SK-N-SH (cell line): ENCODE measurements at regions of chr15 and their contacts with region 1.

Region 1: GRCh38 chr15:91520850-91521249 is 332.7 kb upstream of the SLCO3A1 start:
- DNase-seq: no peak
- H3K4me3 ChIP-seq: no peak overlapping the region
- H3K27ac ChIP-seq: no peak overlapping the region
- H3K4me1 ChIP-seq: peaks cover 0 to 12% of the 10 kb centered on the region in 2 experiments; a peak in 2 of 4 replicates
- H3K27me3 ChIP-seq: no peaks in the 10 kb centered on the region
- CTCF ChIP-seq: no peak
- EP300 ChIP-seq: no peak
- RAD21 ChIP-seq: no peak

Region 2: DNA sequence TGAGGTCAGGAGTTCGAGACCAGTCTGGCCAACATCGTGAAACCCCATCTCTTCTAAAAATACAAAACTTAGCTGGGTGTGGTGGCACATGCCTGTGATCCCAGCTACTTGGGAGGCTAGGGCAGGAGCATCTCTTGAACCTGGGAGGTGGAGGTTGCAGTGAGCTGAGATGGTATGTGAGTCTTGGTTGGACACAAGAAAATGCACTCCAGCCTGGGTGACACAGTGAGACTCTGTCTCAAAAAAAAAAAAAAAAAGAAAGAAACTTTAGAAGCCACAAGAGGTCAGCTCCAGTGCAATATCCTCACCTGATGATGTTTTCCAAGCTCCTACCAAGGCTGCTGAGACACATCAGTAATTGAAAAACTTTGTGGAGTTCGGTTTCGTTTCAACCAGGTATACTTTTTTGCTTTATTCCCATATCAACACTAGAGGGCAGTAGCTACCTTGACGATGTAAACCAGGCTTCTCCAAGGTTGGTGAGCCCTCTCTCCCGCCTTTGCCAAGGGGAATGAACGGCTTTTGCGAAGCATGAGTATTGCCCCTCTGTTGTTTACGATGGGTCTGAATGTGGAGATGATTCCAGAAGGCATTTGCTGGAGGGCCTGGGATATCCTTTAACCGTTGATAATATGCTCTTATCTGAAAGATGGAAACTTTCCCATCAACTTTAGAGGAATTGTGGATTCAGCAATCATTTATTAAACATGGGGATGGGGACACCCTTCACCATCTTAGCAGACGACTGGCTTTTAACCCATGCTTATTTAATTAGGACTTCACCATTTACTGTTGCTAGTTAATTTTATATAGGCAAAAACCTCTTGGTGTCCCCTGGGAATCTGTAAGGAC is 218.0 kb before region 1 on chr15:
- CTCF ChIA-PET with region 1: interaction called, 11 read pairs
- POLR2A ChIA-PET with region 1: no interaction called
- DNase-seq: peak; percentile 83
- H3K4me3 ChIP-seq: peak overlapping the region in 1 of 2 experiments; percentile 16; a peak in 1 of 4 replicates
- H3K27ac ChIP-seq: no peak overlapping the region
- H3K4me1 ChIP-seq: peaks cover 0 to 4% of the 10 kb centered on the region in 2 experiments; a peak in 3 of 4 replicates
- H3K27me3 ChIP-seq: peaks cover 10% of the 10 kb centered on the region
- CTCF ChIP-seq: peak; percentile 80
- EP300 ChIP-seq: no peak
- RAD21 ChIP-seq: peak; percentile 99

Region 3: DNA sequence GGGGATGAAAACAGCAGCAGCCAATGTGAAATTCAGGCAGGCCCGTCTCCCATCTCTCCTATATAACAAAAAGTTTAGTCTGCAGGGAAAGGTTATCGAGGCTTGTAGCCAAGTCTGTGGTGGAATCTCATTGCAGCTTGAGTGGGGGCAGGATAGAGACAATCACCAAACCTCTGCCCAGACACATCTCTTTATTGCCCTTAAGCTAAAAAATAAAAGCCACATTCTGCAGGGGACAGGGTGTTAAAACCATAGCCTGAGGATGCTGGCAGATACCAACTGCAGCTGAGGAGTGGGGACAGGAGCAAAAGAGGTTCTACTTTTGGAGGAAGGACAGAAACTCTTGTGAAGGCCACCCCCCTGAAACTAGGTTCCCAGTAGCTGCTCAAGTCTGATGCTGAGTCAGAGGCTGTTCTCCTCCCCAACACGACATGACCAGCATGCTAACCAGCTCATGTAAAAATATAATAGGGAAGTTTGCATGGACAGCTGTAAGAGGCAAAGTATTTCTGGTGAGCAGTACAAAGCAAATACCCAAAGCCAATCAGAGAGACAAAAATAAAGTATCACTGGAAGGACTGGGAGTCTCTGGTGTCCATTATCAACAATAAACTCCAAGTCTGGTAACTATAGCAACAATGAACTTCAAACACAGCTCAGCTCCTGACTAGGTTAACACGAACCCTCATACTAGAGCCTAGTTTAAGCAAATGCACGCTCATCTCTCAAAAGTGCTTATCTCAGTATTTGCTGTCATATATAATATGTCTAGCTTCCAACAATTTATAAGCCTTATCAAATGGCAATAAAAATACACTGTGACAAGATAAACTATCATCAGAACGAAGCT is 29.5 kb before region 1 on chr15:
- CTCF ChIA-PET with region 1: no interaction called
- POLR2A ChIA-PET with region 1: no interaction called
- DNase-seq: no peak
- H3K4me3 ChIP-seq: no peak overlapping the region
- H3K27ac ChIP-seq: no peak overlapping the region
- H3K4me1 ChIP-seq: no peaks in the 10 kb centered on the region
- H3K27me3 ChIP-seq: no peaks in the 10 kb centered on the region
- CTCF ChIP-seq: no peak
- EP300 ChIP-seq: no peak
- RAD21 ChIP-seq: no peak

Region 4: DNA sequence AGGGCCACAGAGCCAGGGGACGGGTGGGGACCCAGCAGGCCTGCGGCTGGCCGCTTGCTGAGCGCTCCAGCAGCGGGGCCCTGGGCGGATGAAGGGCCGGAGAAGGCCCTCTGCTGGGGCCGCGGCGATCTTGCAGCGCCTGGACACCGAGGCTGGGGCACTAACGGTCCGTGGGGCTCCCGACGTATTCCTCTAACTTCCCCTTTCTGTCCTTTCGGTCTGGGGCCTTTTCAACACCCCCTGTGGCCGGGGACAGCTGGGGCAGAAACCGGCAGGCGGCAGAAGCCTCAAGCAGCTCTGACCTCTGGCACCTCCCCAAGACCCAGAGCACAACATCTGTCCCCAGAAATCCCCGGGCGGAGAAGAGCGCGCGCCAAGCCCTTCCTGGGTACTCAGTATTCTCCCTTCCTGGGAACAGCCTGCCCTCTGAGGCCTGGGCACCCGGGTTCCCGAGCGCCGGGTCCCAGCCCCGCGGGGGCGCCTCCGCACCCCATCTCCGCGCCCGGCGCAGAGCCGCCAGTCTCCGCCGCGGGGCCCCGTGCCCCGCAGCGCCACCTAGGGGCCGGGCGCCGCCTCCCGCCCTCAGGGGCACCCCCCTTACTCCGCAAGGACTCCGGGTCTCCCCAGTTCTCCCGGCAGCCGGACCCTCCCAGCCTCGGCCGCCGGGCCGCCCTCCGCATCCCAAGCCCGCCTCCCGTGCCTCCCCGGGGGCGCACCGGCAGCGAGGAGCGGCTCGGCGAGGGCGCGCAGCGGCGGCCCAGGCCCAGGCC is 332.1 kb after region 1 on chr15:
- CTCF ChIA-PET with region 1: no interaction called
- POLR2A ChIA-PET with region 1: no interaction called
- DNase-seq: peak; percentile 91
- H3K4me3 ChIP-seq: peak overlapping the region; percentile 80 to 93
- H3K27ac ChIP-seq: peak overlapping the region; percentile 73 to 81
- H3K4me1 ChIP-seq: peaks cover 19 to 20% of the 10 kb centered on the region in 2 experiments
- H3K27me3 ChIP-seq: no peaks in the 10 kb centered on the region
- CTCF ChIP-seq: peak; percentile 76
- EP300 ChIP-seq: no peak
- RAD21 ChIP-seq: peak; percentile 66